ENCODE measurements at regions of chr9 and their contacts with region 1.

Region 1: DNA sequence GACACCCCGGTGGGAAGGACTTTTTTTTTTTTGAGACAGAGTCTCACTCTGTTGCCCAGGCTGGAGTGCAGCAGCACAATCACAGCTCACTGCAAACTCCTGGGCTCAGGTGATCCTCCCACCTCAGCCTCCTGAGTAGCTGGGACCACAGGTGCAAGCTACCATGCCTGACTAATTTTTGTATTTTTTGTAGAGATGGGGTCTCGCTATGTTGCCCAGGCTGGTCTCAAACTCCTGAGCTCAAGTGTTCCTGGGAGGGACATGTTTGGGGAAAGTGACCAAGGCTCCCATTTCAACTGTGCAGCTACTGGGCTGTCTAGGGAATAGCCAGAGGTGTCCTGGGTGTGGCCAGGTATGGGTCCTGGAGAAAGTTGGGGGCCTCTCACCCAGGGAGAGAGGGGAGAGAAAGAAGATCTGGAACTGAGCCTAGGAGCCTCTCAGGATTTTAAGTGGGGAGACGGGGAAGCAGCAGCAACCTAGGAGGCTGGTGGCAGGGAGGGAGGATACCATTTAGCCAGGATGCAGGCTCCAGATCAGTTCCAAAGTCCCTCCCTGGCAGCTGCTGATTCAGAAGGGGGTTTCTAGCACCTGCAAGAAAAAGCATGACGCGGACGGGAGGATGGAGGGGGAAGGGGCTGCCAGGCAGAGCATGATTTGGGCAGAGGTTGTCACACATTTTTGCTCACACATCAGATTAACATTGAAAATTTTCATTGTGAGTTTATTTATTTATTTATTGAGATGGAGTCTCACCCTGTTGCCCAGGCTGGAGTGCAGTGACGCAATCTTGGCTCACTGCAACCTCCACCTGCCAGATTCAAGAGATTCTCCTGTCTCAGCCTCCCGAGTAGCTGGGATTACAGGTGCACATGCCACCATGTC is 6.7 kb upstream of the TOR1B start:
- DNase-seq: no peak
- H3K4me3 ChIP-seq: no peak overlapping the region
- H3K27ac ChIP-seq: no peak overlapping the region
- H3K4me1 ChIP-seq: no peaks in the 10 kb centered on the region
- H3K27me3 ChIP-seq: 0 out of 2 replicates have a peak, but pooled peaks cover 20% of the 10 kb centered on the region
- CTCF ChIP-seq: no peak

Region 2: DNA sequence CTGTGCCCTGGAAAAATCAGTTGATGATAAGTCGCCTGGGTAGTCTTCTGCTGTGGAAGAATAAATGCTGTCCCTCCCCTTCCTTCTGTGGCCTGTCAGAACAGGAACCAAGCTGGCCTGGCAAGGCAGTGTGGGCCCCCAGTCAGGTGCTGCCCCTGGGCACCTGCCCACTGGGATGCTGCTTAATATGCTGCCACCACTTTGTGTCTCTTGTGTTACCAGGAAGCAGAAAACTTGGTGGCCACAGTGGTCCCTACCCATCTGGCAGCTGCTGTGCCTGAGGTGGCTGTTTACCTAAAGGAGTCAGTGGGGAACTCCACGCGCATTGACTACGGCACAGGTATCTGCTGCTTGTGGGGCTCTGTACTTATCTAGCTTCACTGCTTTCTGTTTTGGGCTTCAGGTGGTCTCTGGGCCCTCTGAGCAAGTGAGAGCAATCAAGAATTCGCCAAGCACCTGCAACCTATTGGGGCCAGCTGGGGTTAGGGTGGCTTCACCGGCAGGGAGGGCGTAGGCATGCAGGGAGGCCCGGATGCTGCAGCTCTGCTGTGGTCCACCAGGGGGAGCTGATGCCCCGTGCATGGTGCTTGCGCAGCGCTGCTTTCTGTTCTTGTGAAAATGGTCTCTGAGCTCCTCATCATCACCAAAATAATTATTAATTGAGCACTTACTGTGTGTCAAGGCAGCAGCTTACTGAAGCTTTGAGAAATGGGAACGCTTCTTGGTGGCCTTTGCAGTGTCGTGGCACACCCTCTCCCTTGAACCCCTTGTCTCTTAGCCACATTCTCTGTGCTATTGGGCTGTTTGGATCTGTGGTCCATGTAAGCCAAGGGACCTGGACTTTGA is 664.7 kb before region 1 on chr9:
- CTCF ChIA-PET with region 1: no interaction called
- POLR2A ChIA-PET with region 1: no interaction called
- intact Hi-C with region 1: loop called (anchors 5 kb)
- DNase-seq: peak in 1 of 2 experiments; percentile 81
- H3K4me3 ChIP-seq: no peak overlapping the region
- H3K27ac ChIP-seq: no peak overlapping the region
- H3K4me1 ChIP-seq: no peaks in the 10 kb centered on the region
- H3K27me3 ChIP-seq: no peaks in the 10 kb centered on the region
- CTCF ChIP-seq: peak; percentile 97

Region 3: GRCh38 chr9:129726322-129727160 is 69.7 kb before region 1 on chr9:
- CTCF ChIA-PET with region 1: interaction called, 3 read pairs
- POLR2A ChIA-PET with region 1: no interaction called
- intact Hi-C with region 1: loop called (anchors 2 kb)
- DNase-seq: peak; percentile 48 to 76
- H3K4me3 ChIP-seq: no peak overlapping the region
- H3K27ac ChIP-seq: no peak overlapping the region
- H3K4me1 ChIP-seq: no peaks in the 10 kb centered on the region
- H3K27me3 ChIP-seq: no peaks in the 10 kb centered on the region
- CTCF ChIP-seq: peak; percentile 97